ENCODE measurements at regions of chr15 and their contacts with region 1.

Region 1: GRCh38 chr15:66386204-66387123 is at the start of gene MAP2K1:
- DNase-seq: peak; percentile 97 to 99 (median 98)
- H3K4me3 ChIP-seq: peak within 1 kb of the TSS; percentile 74
- H3K4me3 Mint-ChIP-seq: peak within 1 kb of the TSS; percentile 88 to 99 (median 97)
- H3K27ac ChIP-seq: peak within 1 kb of the TSS; percentile 78
- H3K27ac Mint-ChIP-seq: peak within 1 kb of the TSS; percentile 89 to 100 (median 98)
- H3K4me1 ChIP-seq: peaks cover 45% of the 10 kb centered on the region
- H3K4me1 Mint-ChIP-seq: peaks cover 48 to 56% (median 56%) of the 10 kb centered on the region in 3 donors
- H3K27me3 ChIP-seq: no peaks in the 10 kb centered on the region
- H3K27me3 Mint-ChIP-seq: no peaks in the 10 kb centered on the region
- total RNA-seq, gene MAP2K1: 69.2 to 72.2 TPM

Region 2: GRCh38 chr15:66369773-66370651 is 16.5 kb before region 1 on chr15:
- CTCF ChIA-PET with region 1: interaction called, 14 read pairs
- POLR2A ChIA-PET with region 1: no interaction called
- DNase-seq: peak in 1 of 5 donors; percentile 33
- H3K4me3 ChIP-seq: peak overlapping the region; percentile 35
- H3K4me3 Mint-ChIP-seq: peak overlapping the region; percentile 34 to 92 (median 80)
- H3K27ac ChIP-seq: no peak overlapping the region
- H3K27ac Mint-ChIP-seq: peak overlapping the region; percentile 25 to 97 (median 88)
- H3K4me1 ChIP-seq: peaks cover 15% of the 10 kb centered on the region
- H3K4me1 Mint-ChIP-seq: peaks cover 13 to 16% (median 15%) of the 10 kb centered on the region in 3 donors
- H3K27me3 ChIP-seq: no peaks in the 10 kb centered on the region
- H3K27me3 Mint-ChIP-seq: peaks cover 0 to 1% of the 10 kb centered on the region in 2 donors

Region 3: DNA sequence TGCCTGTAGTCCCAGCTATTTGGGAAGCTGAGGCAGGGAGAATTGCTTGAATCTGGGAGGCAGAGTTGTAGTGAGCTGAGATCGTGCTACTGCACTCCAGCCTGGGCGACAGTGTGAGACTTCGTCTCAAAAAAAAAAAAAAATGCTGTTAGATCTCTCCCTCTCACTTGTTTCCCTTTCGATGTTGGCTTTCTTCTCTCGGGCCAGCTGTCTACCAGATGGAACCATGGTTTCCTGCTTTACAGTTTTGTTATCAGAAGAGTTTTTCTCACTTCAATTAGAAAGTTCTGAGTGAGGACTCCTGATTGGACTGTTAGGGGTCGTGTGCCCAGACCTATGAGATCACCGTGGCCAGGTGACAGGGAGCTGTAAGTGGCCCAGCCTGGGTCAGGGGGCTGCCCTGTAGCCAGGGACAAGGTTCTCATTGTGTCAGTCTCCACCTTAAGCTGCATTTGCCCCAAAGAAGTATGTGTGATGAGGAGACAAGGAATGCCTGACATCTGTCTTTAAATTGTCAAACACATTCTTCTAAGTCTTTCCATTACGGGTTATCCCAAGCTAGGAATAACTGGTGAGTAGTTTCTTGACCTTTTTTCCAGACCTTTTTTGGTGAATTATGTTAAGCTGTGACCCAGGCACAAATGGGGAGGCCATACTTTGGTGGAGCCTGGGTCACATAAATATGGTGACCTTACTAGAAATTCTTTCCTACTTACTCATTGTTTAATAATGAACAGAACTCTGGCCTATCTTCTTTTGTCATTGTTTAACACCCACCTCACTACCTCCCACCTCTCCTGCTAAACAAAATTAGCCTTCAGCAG is 85.9 kb after region 1 on chr15:
- CTCF ChIA-PET with region 1: interaction called, 13 read pairs
- POLR2A ChIA-PET with region 1: interaction called, 3 read pairs
- DNase-seq: peak; percentile 15 to 75 (median 70)
- H3K4me3 ChIP-seq: peak overlapping the region; percentile 21
- H3K4me3 Mint-ChIP-seq: peak overlapping the region; percentile 16 to 87 (median 74)
- H3K27ac ChIP-seq: peak overlapping the region; percentile 2
- H3K27ac Mint-ChIP-seq: peak overlapping the region; percentile 83 to 97 (median 91)
- H3K4me1 ChIP-seq: peaks cover 27% of the 10 kb centered on the region
- H3K4me1 Mint-ChIP-seq: peaks cover 34 to 51% (median 47%) of the 10 kb centered on the region in 3 donors
- H3K27me3 ChIP-seq: no peaks in the 10 kb centered on the region
- H3K27me3 Mint-ChIP-seq: no peaks in the 10 kb centered on the region

Region 4: DNA sequence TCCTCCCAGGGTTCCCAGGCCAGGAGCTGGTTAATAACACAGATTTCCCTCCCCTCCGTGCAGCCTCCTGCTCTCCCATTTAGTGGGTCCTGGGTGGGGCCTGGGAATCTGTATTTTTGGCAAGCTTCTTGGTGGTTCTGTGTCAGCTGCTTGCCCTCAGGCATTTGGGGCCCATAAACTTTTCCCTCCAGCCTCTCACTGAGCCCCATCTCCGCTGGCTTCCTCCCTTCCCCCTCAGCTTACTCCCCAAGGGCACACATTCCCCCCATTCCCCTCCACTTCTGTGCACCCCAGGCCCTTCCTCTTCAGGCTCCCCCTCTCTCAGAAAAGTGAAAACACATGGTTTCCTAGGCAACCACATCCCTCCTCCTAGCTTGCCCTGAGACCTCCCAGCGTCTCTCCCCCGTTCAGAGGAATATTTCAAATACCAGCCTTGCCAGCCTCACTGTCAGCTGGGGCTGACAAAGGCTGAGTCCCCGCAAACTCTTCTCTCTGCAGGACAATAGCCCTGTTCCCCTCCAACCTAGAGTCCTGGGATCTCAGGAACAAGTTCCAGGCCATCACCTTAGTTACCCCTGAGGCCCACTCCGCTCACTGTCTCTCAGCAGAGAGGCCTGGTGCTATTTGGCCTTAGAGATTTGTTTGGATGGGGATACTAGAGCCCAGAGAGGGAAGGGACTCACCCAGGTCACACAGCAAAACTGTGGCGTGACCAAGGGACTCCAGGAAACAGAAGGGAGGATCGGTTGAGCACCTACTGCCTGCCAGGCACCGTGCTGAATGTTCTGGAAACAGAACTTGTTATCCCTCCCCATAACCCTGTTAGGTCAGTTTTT is 270.9 kb after region 1 on chr15:
- CTCF ChIA-PET with region 1: no interaction called
- POLR2A ChIA-PET with region 1: no interaction called
- DNase-seq: no peak
- H3K4me3 ChIP-seq: no peak overlapping the region
- H3K4me3 Mint-ChIP-seq: no peak overlapping the region
- H3K27ac ChIP-seq: no peak overlapping the region
- H3K27ac Mint-ChIP-seq: no peak overlapping the region
- H3K4me1 ChIP-seq: peaks cover 4% of the 10 kb centered on the region
- H3K4me1 Mint-ChIP-seq: peaks cover 0 to 11% (median 7%) of the 10 kb centered on the region in 3 donors
- H3K27me3 ChIP-seq: no peaks in the 10 kb centered on the region
- H3K27me3 Mint-ChIP-seq: peaks cover 15 to 48% of the 10 kb centered on the region in 2 donors

Measured in CD8-positive, alpha-beta memory T cell (primary cell).